ENCODE measurements at regions of chr19 and their contacts with region 1.

Region 1: GRCh38 chr19:11530432-11530831 is 1.5 kb upstream of the ECSIT start:
- DNase-seq: peak; percentile 86 to 99 (median 92)

Region 2: GRCh38 chr19:11494634-11495285 is 35.7 kb before region 1 on chr19:
- intact Hi-C with region 1: no loop called
- DNase-seq: no peak

Region 3: GRCh38 chr19:11505032-11505503 is 25.4 kb before region 1 on chr19:
- intact Hi-C with region 1: loop called (anchors 1 kb)
- DNase-seq: peak; percentile 92 to 100 (median 97)

Measured in posterior cingulate gyrus (tissue), 11 donors.